ENCODE measurements at regions of chr12 and their contacts with region 1.

Region 1: DNA sequence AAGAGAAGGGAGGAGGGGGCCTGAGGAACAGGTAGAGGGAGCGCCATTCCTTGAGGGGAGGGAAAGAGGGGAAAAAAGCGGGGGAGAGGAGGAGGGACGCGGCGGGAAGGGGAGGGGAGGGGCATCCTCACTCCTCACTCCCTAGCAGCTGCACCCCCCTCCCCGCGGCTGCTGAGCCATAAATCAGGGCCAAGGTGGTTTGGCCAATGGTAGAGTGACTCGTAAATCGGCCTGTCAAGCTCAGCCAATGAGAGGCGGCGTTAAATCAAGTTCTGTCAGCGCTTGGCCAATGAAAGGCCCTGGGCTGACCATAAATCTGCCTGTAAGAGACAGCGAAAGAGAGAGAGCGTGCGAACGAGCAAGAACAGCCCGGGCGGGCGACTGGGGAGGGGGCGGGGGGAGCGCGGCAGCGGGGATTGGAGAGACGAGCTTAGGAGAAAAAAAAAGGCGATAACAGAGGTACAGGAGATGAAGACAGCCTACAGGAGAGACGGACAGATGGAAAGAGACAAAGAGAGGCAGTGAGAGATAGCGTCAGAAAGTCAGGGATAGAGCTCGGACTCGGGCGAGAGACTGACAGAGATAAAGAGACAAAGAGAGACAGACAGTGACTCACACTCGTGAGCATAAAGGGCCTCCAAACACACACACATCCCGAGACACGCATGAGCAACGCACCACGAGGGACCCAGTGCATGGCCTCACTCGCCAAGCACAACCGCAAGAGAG is 5.1 kb downstream of the GPR84 start:
- DNase-seq: peak; percentile 89 to 98
- H3K4me3 ChIP-seq: peak overlapping the region; percentile 57 to 78 (median 74)
- H3K27ac ChIP-seq: peak overlapping the region; percentile 35; the same call in 1 of the 2 replicates
- H3K4me1 ChIP-seq: peaks cover 16 to 38% (median 20%) of the 10 kb centered on the region in 4 experiments
- H3K27me3 ChIP-seq: no peaks in the 10 kb centered on the region; a peak in 1 of 7 replicates
- CTCF ChIP-seq: no peak
- EP300 ChIP-seq: no peak; a peak in 1 of 3 replicates
- POLR2A ChIP-seq: 0 out of 3 replicates have a peak, but pooled peaks of 1 of the 2 experiments have one; percentile 8
- RAD21 ChIP-seq: no peak

Region 2: DNA sequence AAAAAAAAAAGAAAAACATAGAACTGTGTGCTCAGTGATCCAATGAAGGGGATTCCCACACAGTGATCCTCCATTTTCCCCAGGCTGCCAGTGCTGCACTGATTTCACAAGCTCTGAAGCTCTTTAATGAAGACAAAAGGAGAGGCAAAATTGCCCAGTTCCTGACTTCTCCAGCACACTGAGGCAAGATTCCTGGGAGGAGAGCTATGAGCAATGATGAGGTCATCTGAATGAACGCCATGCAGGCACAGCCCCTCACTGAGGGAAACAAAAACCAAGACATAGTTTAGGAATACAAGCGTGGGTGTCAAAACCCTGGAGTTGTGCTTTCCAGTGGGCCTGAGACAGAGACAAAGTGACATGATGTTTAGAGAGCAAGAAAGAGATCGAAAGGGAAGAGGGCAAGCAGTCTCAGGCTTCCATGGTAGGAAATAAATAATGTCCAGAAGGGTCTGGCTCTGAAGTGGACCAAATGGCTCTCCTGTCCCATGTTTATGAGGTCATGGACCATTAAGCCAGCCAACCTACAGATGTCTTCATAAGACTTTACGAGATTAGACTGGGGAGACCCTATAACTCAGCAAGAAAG is 129.5 kb before region 1 on chr12:
- CTCF ChIA-PET with region 1: interaction called, 12 read pairs
- POLR2A ChIA-PET with region 1: interaction called, 3 read pairs
- DNase-seq: no peak
- H3K4me3 ChIP-seq: no peak overlapping the region
- H3K27ac ChIP-seq: 0 out of 2 replicates have a peak overlapping the region, but pooled peaks have one; percentile 0
- H3K4me1 ChIP-seq: no peaks in the 10 kb centered on the region
- H3K27me3 ChIP-seq: no peaks in the 10 kb centered on the region
- CTCF ChIP-seq: no peak
- EP300 ChIP-seq: no peak
- POLR2A ChIP-seq: no peak
- RAD21 ChIP-seq: no peak

Region 3: GRCh38 chr12:54259194-54260011 is 99.8 kb before region 1 on chr12:
- CTCF ChIA-PET with region 1: interaction called, 28 read pairs
- POLR2A ChIA-PET with region 1: interaction called, 12 read pairs
- DNase-seq: peak; percentile 89
- H3K4me3 ChIP-seq: peak overlapping the region; percentile 35 to 56 (median 46)
- H3K27ac ChIP-seq: peak overlapping the region; percentile 97
- H3K4me1 ChIP-seq: peaks cover 3 to 23% (median 15%) of the 10 kb centered on the region in 4 experiments
- H3K27me3 ChIP-seq: no peaks in the 10 kb centered on the region
- CTCF ChIP-seq: no peak
- EP300 ChIP-seq: peak; percentile 59 to 84; a peak in 2 of 3 replicates
- POLR2A ChIP-seq: peak; percentile 84 to 85
- RAD21 ChIP-seq: 0 out of 4 replicates have a peak, but pooled peaks of 1 of the 2 experiments have one; percentile 10

Region 4: DNA sequence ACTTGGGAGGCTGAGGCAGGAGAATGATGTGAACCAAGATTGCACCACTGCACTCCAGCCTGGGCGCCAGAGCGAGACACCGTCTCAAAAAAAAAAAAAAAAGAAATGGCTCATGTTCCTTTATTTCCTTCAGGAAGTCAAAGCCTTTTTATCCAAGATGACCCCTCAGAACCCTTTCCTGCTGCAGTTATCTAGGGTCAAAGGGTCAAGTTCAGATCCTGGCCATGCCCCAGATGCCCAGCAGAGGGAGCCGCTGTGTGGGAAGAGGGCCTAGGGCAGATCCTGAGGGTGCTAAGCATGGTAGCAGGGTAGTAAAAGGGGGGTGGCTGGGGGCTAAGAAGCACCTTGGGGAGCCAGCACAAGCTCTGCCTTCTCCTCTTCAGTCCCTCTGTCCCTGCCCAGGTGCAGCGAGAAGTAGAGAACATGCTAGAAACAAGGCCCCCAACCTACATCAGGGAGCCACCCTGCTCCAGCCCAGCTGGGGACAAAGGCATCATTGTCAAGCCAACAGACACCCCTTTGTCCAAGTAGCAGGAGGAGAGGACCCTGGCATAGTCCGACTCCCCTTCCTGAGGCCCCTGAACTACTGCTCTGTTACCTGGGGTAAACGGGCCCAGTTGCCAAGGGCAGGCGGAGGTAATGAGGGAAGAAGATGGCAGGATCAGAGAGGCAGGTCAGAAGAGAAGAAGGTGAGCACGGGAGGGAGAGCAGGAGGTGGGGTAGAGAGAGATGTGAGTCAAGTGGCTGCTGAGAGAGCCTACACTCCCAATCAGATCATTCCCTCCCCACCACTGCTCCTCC is 64.8 kb before region 1 on chr12:
- CTCF ChIA-PET with region 1: interaction called, 251 read pairs
- POLR2A ChIA-PET with region 1: interaction called, 31 read pairs
- DNase-seq: peak in 1 of 2 experiments; percentile 94
- H3K4me3 ChIP-seq: no peak overlapping the region
- H3K27ac ChIP-seq: no peak overlapping the region
- H3K4me1 ChIP-seq: peaks cover 0 to 2% (median 0%) of the 10 kb centered on the region in 4 experiments; a peak in 1 of 7 replicates
- H3K27me3 ChIP-seq: peaks cover 0 to 4% (median 0%) of the 10 kb centered on the region in 4 experiments; a peak in 1 of 7 replicates
- CTCF ChIP-seq: peak; percentile 91 to 95 (median 93)
- EP300 ChIP-seq: no peak
- POLR2A ChIP-seq: no peak
- RAD21 ChIP-seq: peak; percentile 81 to 92

Region 5: GRCh38 chr12:54324617-54325441 is 34.4 kb before region 1 on chr12 and contains the start of gene COPZ1:
- CTCF ChIA-PET with region 1: interaction called, 348 read pairs
- POLR2A ChIA-PET with region 1: interaction called, 109 read pairs
- DNase-seq: peak; percentile 87 to 97
- H3K4me3 ChIP-seq: peak within 1 kb of the TSS; percentile 79 to 97 (median 88)
- H3K27ac ChIP-seq: peak within 1 kb of the TSS; percentile 83
- H3K4me1 ChIP-seq: peaks cover 0 to 10% (median 4%) of the 10 kb centered on the region in 4 experiments; a peak in 2 of 7 replicates
- H3K27me3 ChIP-seq: no peaks in the 10 kb centered on the region
- CTCF ChIP-seq: peak; percentile 57 to 89 (median 81)
- EP300 ChIP-seq: no peak
- POLR2A ChIP-seq: peak; percentile 54 to 87
- RAD21 ChIP-seq: peak; percentile 80 to 82
- total RNA-seq, gene COPZ1: 94.2 and 103 TPM in 2 replicates

Region 6: DNA sequence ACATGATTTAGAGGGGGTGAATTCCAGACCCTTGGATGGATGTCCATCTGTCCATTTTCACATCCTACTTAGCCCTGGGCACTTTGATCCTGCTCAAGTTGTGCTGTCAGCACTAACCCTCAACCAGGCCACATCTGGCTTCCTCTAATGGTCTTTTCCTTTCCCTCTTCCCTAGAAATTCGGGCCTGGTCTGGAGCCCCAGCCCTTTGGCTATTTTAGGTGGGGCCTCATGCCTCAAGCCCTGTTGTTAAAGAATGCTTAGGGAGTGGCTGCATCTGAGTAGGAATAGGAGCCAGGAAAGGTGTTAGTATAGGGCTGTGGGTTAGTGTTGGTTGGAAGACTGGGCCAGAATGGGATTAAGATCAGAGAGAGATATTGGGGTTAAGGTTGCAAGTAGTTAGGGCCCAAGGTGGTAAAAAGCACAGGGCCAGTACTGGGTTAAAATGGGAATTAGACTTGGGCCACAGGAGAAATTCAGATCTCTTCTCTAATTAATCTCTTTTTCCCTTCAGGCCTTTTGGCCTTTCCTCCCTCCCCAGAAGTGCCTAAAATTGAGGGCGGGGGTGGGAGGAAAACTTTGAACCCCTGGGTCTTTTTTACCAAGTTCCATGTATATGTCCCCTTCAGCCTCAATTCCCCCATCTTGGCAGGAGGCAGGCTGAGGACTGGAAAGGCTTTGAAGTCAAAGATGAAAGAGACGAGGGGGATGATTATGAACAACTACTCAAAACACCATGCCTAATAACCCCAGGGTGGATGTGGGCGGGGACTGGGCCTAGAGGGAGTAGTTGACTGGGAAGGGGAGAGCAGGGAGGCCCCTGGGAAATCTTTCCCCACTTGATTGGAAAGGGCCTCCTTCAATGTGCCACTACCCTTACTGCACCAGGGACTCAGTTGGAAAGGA is 29.3 kb after region 1 on chr12:
- CTCF ChIA-PET with region 1: interaction called, 100 read pairs
- POLR2A ChIA-PET with region 1: interaction called, 4 read pairs
- DNase-seq: no peak
- H3K4me3 ChIP-seq: peak overlapping the region in 1 of 4 experiments; percentile 11; a peak in 2 of 8 replicates
- H3K27ac ChIP-seq: no peak overlapping the region
- H3K4me1 ChIP-seq: peaks cover 51 to 68% (median 58%) of the 10 kb centered on the region in 4 experiments
- H3K27me3 ChIP-seq: peaks cover 0 to 4% (median 0%) of the 10 kb centered on the region in 4 experiments; a peak in 2 of 7 replicates
- CTCF ChIP-seq: no peak
- EP300 ChIP-seq: no peak
- POLR2A ChIP-seq: no peak
- RAD21 ChIP-seq: no peak

Region 7: GRCh38 chr12:54460317-54460923 is 101.2 kb after region 1 on chr12:
- CTCF ChIA-PET with region 1: no interaction called
- POLR2A ChIA-PET with region 1: no interaction called
- DNase-seq: no peak
- H3K4me3 ChIP-seq: no peak overlapping the region
- H3K27ac ChIP-seq: no peak overlapping the region
- H3K4me1 ChIP-seq: no peaks in the 10 kb centered on the region
- H3K27me3 ChIP-seq: peaks cover 4 to 39% (median 21%) of the 10 kb centered on the region in 4 experiments
- CTCF ChIP-seq: no peak
- EP300 ChIP-seq: no peak
- POLR2A ChIP-seq: no peak
- RAD21 ChIP-seq: no peak